ENCODE measurements at regions of chr12 and their contacts with region 1.

Region 1: GRCh38 chr12:41277116-41277945 is 89.2 kb downstream of the PDZRN4 start:
- DNase-seq: no peak
- H3K4me3 ChIP-seq: no peak overlapping the region
- H3K27ac ChIP-seq: no peak overlapping the region
- H3K4me1 ChIP-seq: no peaks in the 10 kb centered on the region
- H3K27me3 ChIP-seq: no peaks in the 10 kb centered on the region
- CTCF ChIP-seq: peak in 2 of 3 experiments; percentile 60 to 64; a peak in 3 of 4 replicates
- EP300 ChIP-seq: no peak
- POLR2A ChIP-seq: no peak
- RAD21 ChIP-seq: peak; percentile 89 to 90

Region 2: DNA sequence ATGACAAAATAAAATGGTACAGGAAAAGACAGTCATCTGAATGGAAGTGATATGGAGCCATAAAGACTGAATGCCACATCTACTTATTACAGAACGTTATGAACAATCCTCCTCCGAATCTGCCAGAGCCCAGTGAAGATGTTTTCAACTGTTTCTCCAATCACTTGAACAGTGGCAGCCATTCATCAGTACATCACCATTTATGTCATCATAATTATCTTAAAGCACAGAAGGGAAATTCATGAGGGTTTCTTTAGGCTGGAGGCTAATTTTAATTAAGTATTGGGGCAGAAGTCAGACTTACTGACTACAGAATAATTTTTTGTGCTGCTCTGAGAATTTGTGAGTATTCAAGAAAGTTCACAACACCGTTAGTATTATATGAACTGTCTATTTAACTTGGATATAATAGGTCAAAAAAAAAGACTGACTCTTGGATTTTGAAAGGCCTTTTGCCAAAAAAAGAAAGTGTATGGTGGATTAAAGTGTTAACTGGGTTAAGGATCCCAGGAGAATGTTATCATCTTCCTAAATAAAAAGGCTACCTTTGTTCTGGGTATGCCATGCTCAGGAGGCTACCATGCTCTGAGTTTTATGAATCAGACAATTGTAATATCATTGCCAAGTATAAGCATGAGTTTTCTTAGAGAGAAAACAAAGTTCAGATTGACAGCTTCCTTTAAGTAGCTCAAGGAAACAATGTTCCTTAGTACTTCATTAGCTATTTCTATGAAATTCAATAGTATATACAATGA is 49.1 kb before region 1 on chr12:
- CTCF ChIA-PET with region 1: no interaction called
- POLR2A ChIA-PET with region 1: no interaction called
- DNase-seq: no peak
- H3K4me3 ChIP-seq: no peak overlapping the region
- H3K27ac ChIP-seq: no peak overlapping the region
- H3K4me1 ChIP-seq: no peaks in the 10 kb centered on the region; a peak in 1 of 7 replicates
- H3K27me3 ChIP-seq: no peaks in the 10 kb centered on the region
- CTCF ChIP-seq: no peak
- EP300 ChIP-seq: no peak
- POLR2A ChIP-seq: no peak
- RAD21 ChIP-seq: no peak

Region 3: GRCh38 chr12:41293011-41293410 is 15.7 kb after region 1 on chr12:
- CTCF ChIA-PET with region 1: interaction called, 12 read pairs
- POLR2A ChIA-PET with region 1: no interaction called
- DNase-seq: no peak
- H3K4me3 ChIP-seq: no peak overlapping the region
- H3K27ac ChIP-seq: no peak overlapping the region
- H3K4me1 ChIP-seq: no peaks in the 10 kb centered on the region
- H3K27me3 ChIP-seq: no peaks in the 10 kb centered on the region
- CTCF ChIP-seq: no peak
- EP300 ChIP-seq: no peak
- POLR2A ChIP-seq: no peak
- RAD21 ChIP-seq: no peak

Region 4: GRCh38 chr12:41663598-41664258 is 386.4 kb after region 1 on chr12:
- CTCF ChIA-PET with region 1: interaction called, 32 read pairs
- POLR2A ChIA-PET with region 1: interaction called, 3 read pairs
- DNase-seq: no peak
- H3K4me3 ChIP-seq: no peak overlapping the region
- H3K27ac ChIP-seq: no peak overlapping the region
- H3K4me1 ChIP-seq: no peaks in the 10 kb centered on the region
- H3K27me3 ChIP-seq: no peaks in the 10 kb centered on the region
- CTCF ChIP-seq: peak in 2 of 3 experiments; percentile 71 to 77; a peak in 3 of 4 replicates
- EP300 ChIP-seq: no peak
- POLR2A ChIP-seq: no peak
- RAD21 ChIP-seq: peak; percentile 91 to 92

Region 5: GRCh38 chr12:41795910-41796309 is 518.6 kb after region 1 on chr12:
- CTCF ChIA-PET with region 1: interaction called, 20 read pairs
- POLR2A ChIA-PET with region 1: no interaction called
- DNase-seq: peak; percentile 34 to 51
- H3K4me3 ChIP-seq: no peak overlapping the region
- H3K27ac ChIP-seq: no peak overlapping the region
- H3K4me1 ChIP-seq: no peaks in the 10 kb centered on the region
- H3K27me3 ChIP-seq: no peaks in the 10 kb centered on the region; a peak in 1 of 7 replicates
- CTCF ChIP-seq: peak; percentile 64 to 82 (median 72)
- EP300 ChIP-seq: no peak
- POLR2A ChIP-seq: no peak
- RAD21 ChIP-seq: peak; percentile 71 to 78

Region 6: GRCh38 chr12:42023733-42024494 is 746.6 kb after region 1 on chr12:
- CTCF ChIA-PET with region 1: interaction called, 19 read pairs
- POLR2A ChIA-PET with region 1: no interaction called
- DNase-seq: peak; percentile 46 to 92
- H3K4me3 ChIP-seq: peak overlapping the region in 1 of 4 experiments; percentile 32; a peak in 1 of 8 replicates
- H3K27ac ChIP-seq: no peak overlapping the region
- H3K4me1 ChIP-seq: no peaks in the 10 kb centered on the region
- H3K27me3 ChIP-seq: peaks cover 0 to 3% (median under 1%) of the 10 kb centered on the region in 4 experiments; a peak in 2 of 7 replicates
- CTCF ChIP-seq: peak; percentile 91 to 94 (median 94)
- EP300 ChIP-seq: 0 out of 3 replicates have a peak, but pooled peaks of 1 of the 2 experiments have one; percentile 35
- POLR2A ChIP-seq: no peak
- RAD21 ChIP-seq: peak; percentile 97 to 98

Measured in H1 (cell line).